Posterior vena cava (tissue), 2 donors: ENCODE measurements at regions of chr12 and their contacts with region 1.

Region 1: DNA sequence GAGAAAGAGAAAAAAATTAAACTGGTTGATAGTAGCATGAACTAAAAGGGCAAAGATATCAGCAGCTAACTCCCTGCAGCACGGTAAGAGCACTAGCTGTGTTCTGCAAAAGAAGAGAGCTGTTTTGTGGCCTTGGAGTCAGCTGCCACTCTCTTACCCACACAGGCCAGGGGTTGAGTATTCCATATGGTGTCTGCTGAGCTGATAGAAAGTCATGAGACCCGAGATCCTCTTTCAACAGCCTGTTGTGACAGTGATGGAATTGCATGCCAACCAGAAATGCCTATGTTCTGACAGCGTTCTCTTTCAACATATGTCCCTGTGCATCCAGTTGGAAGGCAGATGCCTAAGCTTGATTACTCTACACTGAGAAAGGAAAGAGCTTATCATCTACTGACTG is 39.9 kb downstream of the TMTC1 start:
- DNase-seq: no peak

Region 2: GRCh38 chr12:29698756-29699155 is 45.0 kb before region 1 on chr12:
- intact Hi-C with region 1: no loop called
- DNase-seq: no peak

Region 3: GRCh38 chr12:29759950-29760349 is 16.1 kb after region 1 on chr12:
- intact Hi-C with region 1: loop called in 1 of 2 experiments (anchors 2 kb)
- DNase-seq: no peak

Region 4: DNA sequence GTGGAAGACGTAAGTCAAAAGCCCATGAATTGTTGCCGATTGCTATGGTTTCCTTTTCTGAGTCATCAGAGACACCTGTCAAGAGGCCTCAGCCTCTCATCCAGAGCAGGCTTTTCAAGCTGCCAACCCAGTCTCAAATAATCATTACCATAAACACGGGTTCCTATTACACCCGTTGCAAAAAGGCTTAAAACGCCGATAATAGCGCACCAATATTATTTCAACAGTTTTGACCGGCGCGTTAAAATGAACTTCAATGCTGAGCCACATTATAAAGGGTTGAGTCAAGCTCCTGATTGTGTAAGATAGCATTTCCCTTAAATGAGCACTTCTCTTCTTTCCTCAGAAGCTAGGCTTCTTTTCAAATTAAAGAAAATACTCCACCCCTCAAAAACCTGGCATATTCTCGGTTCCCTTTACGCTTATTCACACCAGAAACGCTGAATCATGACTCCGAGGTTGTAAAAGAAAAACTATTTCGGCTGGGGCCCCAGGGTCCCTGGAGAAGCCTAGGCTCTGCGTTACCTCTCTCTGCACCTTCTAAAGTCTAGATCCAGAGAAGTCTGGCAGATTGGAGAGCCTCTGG is 38.6 kb after region 1 on chr12:
- intact Hi-C with region 1: loop called in 1 of 2 experiments (anchors 2 kb)
- DNase-seq: no peak

Region 5: GRCh38 chr12:29794856-29795255 is 51.1 kb after region 1 on chr12:
- intact Hi-C with region 1: no loop called
- DNase-seq: no peak